Calu3 (cell line): ENCODE measurements at regions of chr1 and their contacts with region 1.

Region 1: DNA sequence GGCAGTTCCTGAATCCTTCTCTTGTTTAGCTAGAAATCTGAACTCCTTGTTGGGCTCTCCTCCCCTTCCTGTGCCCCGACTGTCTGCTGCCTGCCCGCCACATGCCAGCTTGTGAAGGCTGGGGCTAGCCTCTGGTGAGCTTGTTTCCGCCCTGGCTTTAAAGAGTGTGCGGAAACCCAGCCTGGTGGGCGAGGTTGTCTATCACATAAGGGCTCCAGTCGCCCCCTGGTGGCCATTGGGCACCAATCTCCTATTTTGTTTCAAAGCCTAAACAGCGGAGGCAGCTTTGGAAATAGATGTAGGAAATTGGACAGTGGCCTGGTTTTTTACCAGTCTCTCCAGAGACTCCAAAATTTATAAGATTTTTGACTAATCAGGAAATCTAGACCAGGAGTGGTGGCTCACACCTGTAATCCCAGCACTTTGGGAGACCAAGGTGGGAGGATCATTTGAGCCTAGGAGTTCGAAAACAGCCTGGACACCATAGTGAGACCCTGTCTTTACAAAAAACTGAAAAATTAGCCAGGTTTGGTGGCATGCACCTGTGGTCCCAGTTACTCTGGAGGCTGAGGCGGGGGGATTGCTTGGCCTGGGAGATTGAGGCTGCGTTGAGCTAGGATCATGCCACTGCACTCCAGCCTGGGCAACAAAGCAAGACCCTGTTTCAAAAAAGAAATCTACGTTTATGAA is 9.8 kb downstream of the ATP8B2 start:
- DNase-seq: peak; percentile 88
- H3K4me3 Mint-ChIP-seq: no peak overlapping the region
- H3K27ac Mint-ChIP-seq: no peak overlapping the region
- H3K4me1 Mint-ChIP-seq: peaks cover 18% of the 10 kb centered on the region
- H3K27me3 Mint-ChIP-seq: peaks cover 78% of the 10 kb centered on the region
- CTCF ChIP-seq: peak; percentile 79

Region 2: GRCh38 chr1:154206196-154206595 is 129.0 kb before region 1 on chr1 and contains the start of gene CFAP141:
- CTCF ChIA-PET with region 1: no interaction called
- intact Hi-C with region 1: no loop called
- DNase-seq: peak; percentile 25
- H3K4me3 Mint-ChIP-seq: no peak within 1 kb of the TSS
- H3K27ac Mint-ChIP-seq: peak within 1 kb of the TSS; percentile 47
- H3K4me1 Mint-ChIP-seq: peaks cover 11% of the 10 kb centered on the region
- H3K27me3 Mint-ChIP-seq: no peaks in the 10 kb centered on the region
- CTCF ChIP-seq: no peak
- total RNA-seq, gene CFAP141: not detected in 2 replicates

Region 3: GRCh38 chr1:154272217-154272998 is 62.8 kb before region 1 on chr1 and contains the start of gene HAX1:
- CTCF ChIA-PET with region 1: interaction called, 12 read pairs
- intact Hi-C with region 1: no loop called
- DNase-seq: peak; percentile 91
- H3K4me3 Mint-ChIP-seq: peak within 1 kb of the TSS; percentile 98
- H3K27ac Mint-ChIP-seq: peak within 1 kb of the TSS; percentile 98
- H3K4me1 Mint-ChIP-seq: peaks cover 9% of the 10 kb centered on the region
- H3K27me3 Mint-ChIP-seq: no peaks in the 10 kb centered on the region
- CTCF ChIP-seq: peak; percentile 83
- total RNA-seq, gene HAX1: 112 and 129 TPM in 2 replicates

Region 4: DNA sequence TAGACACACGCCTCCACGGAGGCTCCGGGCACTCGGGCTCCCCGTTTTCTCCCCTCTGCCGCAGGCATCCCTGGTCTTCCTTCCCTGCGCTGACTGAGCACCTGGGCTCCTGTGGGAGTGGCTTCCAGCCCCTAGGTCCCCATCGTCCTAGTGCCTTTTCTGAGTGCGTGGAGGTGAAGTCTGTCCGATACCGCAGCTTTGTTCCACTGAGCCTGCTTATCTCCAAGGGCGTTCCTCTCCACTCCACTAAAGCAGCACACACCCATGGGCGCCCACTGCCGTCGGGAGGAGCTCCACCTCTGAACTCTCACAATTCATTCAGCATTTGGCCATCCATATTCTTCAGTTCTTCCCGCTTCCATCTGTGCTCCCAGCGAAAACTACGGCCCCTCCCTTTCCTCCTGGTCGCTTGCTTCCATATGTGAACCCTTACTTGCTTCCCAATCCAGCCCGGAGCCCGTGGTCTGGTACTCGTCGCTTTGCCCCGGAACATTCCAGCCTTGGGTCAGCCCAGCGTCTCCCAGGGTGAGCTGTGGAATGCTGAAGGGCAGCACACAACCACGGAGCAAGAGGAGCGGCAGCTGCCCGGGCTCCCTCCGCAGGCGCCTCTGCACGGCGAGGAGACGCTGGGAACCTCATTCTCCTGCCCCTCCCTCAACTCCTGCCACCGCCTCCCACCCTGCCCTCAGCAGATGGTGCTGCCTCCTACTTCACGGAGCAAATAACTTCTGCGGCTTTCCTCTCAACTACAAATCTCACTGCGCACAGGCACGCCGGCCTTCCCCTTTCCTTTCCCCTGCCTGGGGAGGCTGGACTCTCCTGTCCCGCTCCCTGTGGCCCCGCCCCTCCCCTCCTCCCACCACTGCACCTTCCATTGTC is 17.6 kb after region 1 on chr1:
- CTCF ChIA-PET with region 1: interaction called, 10 read pairs
- intact Hi-C with region 1: no loop called
- DNase-seq: peak; percentile 49
- H3K4me3 Mint-ChIP-seq: peak overlapping the region; percentile 63
- H3K27ac Mint-ChIP-seq: peak overlapping the region; percentile 32
- H3K4me1 Mint-ChIP-seq: peaks cover 32% of the 10 kb centered on the region
- H3K27me3 Mint-ChIP-seq: peaks cover 26% of the 10 kb centered on the region
- CTCF ChIP-seq: peak; percentile 17

Region 5: DNA sequence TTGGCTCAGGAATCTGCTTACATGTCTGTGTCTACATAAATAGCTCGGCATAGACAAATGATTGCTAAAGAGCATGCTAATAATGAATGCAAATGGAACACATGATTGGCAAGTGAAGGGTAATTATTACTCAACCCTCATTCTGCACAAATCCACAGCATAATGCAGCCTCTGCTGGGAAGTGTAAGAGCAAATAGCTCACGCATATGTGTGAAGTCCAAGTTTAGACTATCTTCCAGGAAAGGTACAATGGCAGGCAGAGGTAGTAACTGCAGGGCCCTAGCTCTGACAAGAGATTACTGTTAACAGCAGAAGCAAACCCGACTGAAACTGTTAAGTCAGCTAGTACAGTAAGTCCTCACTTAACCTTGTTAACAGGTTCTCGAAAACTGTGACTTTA is 63.0 kb after region 1 on chr1:
- CTCF ChIA-PET with region 1: no interaction called
- intact Hi-C with region 1: no loop called
- DNase-seq: no peak
- H3K4me3 Mint-ChIP-seq: no peak overlapping the region
- H3K27ac Mint-ChIP-seq: no peak overlapping the region
- H3K4me1 Mint-ChIP-seq: no peaks in the 10 kb centered on the region
- H3K27me3 Mint-ChIP-seq: peaks cover 15% of the 10 kb centered on the region
- CTCF ChIP-seq: no peak